HAP-1 (cell line): ENCODE measurements at regions of chr12 and their contacts with region 1.

Region 1: DNA sequence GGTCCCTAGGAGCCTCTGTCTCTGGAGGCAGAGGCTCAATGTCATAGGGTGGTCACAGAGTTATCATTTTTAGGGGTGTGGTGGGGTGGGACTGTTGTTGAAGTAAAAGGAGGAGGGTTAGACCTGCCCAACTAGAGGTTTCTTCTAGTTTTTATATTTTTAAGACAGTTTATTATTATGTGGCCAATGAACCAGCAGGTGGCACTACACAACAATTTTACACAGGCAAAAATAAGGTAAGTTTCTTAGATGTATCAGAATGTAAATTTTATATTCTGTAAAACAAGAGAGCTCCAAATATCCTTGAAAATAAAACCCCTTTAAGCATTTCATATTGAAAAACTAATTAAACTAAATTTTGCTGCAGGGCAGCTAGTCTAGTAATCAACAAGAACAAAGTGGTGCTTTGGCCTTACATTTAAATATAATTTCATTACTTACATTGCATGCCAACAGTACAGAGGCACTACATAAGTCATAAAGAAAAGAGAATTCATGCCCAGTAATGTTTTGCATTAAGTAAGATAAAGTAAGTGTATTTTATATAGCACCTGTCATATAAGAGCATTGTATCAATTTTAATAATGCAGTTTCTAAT is 22.2 kb upstream of the OVCH1 start:
- DNase-seq: peak; percentile 48 to 59
- H3K4me3 ChIP-seq: no peak overlapping the region
- H3K4me1 ChIP-seq: no peaks in the 10 kb centered on the region
- H3K27me3 ChIP-seq: no peaks in the 10 kb centered on the region

Region 2: GRCh38 chr12:28770329-28770728 is 749.4 kb before region 1 on chr12:
- in situ Hi-C with region 1: no loop called
- DNase-seq: no peak
- H3K4me3 ChIP-seq: no peak overlapping the region
- H3K4me1 ChIP-seq: no peaks in the 10 kb centered on the region
- H3K27me3 ChIP-seq: no peaks in the 10 kb centered on the region

Region 3: GRCh38 chr12:29317556-29318363 is 201.9 kb before region 1 on chr12:
- in situ Hi-C with region 1: loop called (anchors 25 kb)
- DNase-seq: peak; percentile 49 to 76
- H3K4me3 ChIP-seq: no peak overlapping the region
- H3K4me1 ChIP-seq: no peaks in the 10 kb centered on the region
- H3K27me3 ChIP-seq: no peaks in the 10 kb centered on the region

Region 4: DNA sequence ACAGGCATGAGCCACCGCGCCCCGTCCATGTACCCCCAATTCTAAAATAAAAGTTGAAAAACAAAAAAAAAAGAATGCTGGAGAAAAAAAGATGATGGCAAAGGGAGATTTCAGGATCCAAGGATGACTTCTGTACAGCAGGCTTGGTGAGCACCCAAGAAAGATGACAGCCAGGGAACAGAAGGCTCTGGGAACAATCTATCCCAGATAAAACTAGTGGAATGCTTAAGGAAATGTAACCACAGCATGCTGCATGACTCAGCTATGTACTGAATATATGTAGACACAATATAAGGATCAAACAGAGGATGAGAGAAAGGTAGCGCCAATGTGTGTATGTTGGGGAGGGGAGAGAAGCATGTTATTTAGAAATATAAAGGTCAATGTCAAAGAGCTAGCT is 387.8 kb after region 1 on chr12:
- in situ Hi-C with region 1: no loop called
- DNase-seq: no peak
- H3K4me3 ChIP-seq: no peak overlapping the region
- H3K4me1 ChIP-seq: no peaks in the 10 kb centered on the region
- H3K27me3 ChIP-seq: no peaks in the 10 kb centered on the region

Region 5: DNA sequence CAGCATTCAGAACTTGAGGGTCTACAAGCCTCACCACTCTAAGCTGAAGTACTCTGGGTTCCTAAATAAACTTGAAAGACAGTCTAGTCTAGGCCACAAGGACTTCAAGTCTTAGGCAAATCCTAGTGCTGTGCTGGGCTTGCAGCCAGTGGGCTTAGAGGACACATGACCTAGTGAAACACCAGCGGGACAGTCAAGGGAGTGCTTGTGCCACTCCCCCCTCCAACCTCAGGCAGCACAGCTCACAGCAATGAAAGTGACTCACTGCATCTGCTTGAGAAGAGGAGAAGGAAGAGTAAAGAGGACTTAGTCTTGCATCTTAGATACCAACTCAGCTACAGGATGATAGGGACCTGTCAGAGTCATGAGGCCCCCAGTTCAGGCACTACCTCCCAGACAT is 737.9 kb after region 1 on chr12:
- in situ Hi-C with region 1: no loop called
- DNase-seq: no peak
- H3K4me3 ChIP-seq: no peak overlapping the region
- H3K4me1 ChIP-seq: peaks cover 7% of the 10 kb centered on the region
- H3K27me3 ChIP-seq: no peaks in the 10 kb centered on the region

Region 6: GRCh38 chr12:30622509-30622908 is 1102.8 kb after region 1 on chr12:
- in situ Hi-C with region 1: no loop called
- DNase-seq: no peak
- H3K4me3 ChIP-seq: no peak overlapping the region
- H3K4me1 ChIP-seq: no peaks in the 10 kb centered on the region; the same call in none of the 2 replicates
- H3K27me3 ChIP-seq: no peaks in the 10 kb centered on the region

Region 7: GRCh38 chr12:30847259-30847658 is 1327.6 kb after region 1 on chr12:
- in situ Hi-C with region 1: loop called (anchors 25 kb)
- DNase-seq: peak; percentile 34 to 51
- H3K4me3 ChIP-seq: no peak overlapping the region
- H3K4me1 ChIP-seq: no peaks in the 10 kb centered on the region
- H3K27me3 ChIP-seq: peaks cover 5% of the 10 kb centered on the region; the same call in 1 of the 2 replicates